ENCODE measurements at regions of chr6 and their contacts with region 1.

Region 1: DNA sequence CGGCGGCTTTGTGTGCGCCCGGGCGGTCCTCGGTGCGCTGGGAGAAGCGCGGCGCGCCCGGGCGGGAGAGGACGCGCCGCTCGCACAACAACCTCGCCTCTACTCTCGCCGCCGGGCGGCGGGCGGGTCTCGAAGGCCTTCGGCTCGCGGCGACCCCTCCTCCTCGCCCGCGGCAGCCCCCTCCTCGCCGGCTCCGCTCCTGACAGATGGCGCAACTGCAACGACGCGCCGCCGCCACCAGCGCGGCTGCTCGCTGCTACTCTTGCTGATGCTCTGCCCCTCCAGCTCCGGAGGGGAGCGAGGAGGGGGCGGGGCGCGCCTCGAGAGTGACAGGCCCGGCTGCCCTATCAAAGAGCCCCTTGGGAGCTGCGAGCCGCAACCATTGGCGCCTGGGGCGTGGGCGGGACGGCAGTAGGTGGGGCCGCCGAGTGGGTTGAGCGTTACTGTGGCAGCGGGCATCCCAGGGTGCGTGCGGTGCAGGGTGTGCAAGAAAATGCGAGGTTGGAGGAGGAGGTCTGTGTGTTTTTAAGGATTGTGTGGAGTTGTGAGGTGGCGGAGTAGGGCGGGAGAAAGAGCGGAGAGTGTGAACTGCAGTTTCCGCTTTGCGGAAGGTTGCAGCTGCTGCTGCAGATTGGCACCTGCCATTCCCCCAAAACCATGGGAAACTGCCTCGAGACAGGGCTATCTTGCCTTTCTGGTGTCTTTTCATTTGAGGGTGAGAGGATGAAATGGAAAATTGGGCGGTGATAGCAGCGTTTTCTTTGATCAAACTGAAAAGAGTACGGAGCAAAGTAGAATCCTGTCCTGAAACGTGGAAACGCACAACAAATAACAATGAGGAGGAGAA is at the start of gene FYN:
- DNase-seq: peak; percentile 99
- H3K4me3 ChIP-seq: peak within 1 kb of the TSS; percentile 78 to 93 (median 86)
- H3K27ac ChIP-seq: peak within 1 kb of the TSS; percentile 81 to 94 (median 89)
- H3K4me1 ChIP-seq: peaks cover 18 to 60% (median 45%) of the 10 kb centered on the region in 6 donors
- H3K27me3 ChIP-seq: peaks cover 0 to 8% (median 0%) of the 10 kb centered on the region in 7 donors
- CTCF ChIP-seq: peak; percentile 47 to 79 (median 63)
- POLR2A ChIP-seq: peak in 2 of 3 donors; percentile 73 to 87
- total RNA-seq, gene FYN: 193 to 409 (median 227) TPM

Region 2: GRCh38 chr6:110378552-110378951 is 1494.8 kb before region 1 on chr6:
- intact Hi-C with region 1: no loop called
- DNase-seq: no peak
- H3K4me3 ChIP-seq: no peak overlapping the region
- H3K27ac ChIP-seq: no peak overlapping the region
- H3K4me1 ChIP-seq: no peaks in the 10 kb centered on the region
- H3K27me3 ChIP-seq: no peaks in the 10 kb centered on the region
- CTCF ChIP-seq: no peak
- POLR2A ChIP-seq: no peak

Region 3: DNA sequence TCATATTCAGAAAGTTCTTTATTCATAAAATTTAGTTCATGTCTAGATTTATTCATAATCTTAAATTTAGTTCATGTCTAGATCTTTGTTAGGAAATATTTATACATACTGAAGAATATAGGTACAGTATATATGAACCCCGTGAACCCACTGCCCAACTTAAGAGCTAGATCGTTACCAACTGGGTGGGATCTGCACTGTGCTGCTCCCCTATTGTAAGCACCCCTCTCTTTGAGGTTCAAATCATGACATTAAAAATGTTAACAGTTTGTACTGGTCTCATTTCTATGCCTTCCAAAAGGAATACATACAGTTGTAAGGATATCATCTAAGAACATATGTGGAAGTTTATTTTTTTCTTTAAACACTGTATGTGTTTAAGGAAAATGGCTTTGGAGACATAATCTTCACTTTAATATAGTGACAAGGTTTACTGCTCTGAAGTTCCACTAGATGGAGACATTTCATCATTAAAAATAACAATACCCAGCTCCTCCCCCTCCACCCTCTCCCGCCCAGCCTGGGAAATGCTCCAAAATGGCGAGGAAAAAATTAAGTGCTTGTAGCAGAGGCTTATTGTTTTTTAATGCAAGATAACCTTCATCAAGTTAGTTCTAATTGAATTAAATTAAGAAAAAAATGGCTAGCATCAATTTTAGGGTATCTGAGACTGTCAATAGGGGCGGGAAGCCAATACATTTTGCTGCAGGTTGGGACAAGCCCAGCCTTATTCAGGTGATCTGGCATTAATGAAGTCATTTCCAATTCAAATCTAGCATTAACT is 163.6 kb before region 1 on chr6:
- intact Hi-C with region 1: no loop called
- DNase-seq: no peak
- H3K4me3 ChIP-seq: peak overlapping the region in 1 of 8 donors; percentile 26
- H3K27ac ChIP-seq: peak overlapping the region in 6 of 8 donors; percentile 22 to 71 (median 57)
- H3K4me1 ChIP-seq: peaks cover 9 to 57% (median 24%) of the 10 kb centered on the region in 6 donors
- H3K27me3 ChIP-seq: no peaks in the 10 kb centered on the region
- CTCF ChIP-seq: peak; percentile 59 to 92 (median 77)
- POLR2A ChIP-seq: no peak

Region 4: DNA sequence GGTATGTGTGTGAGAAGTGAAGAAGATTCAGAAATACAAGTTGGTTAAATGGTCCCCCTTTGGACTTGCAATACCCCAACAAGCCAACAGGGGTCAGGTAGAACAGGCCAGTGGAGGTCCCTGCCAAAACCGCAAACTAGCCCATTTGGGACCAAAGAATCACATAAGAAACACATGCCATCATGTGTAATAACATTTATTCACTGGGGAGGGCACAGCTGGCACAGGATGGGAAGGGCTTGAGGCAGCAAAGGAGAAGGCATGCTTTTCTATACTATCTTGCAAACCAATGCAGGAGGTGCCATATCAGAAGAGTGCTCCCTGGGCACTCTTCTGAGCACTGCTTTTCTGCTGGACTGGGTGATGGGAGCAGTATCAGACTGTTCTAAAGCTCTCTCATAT is 151.6 kb before region 1 on chr6:
- intact Hi-C with region 1: loop called (anchors 10 kb)
- DNase-seq: no peak
- H3K4me3 ChIP-seq: no peak overlapping the region
- H3K27ac ChIP-seq: peak overlapping the region in 5 of 8 donors; percentile 9 to 59 (median 51)
- H3K4me1 ChIP-seq: peaks cover 26 to 83% (median 57%) of the 10 kb centered on the region in 6 donors
- H3K27me3 ChIP-seq: no peaks in the 10 kb centered on the region
- CTCF ChIP-seq: peak in 10 of 11 experiments; percentile 14 to 69 (median 58)
- POLR2A ChIP-seq: no peak

Measured in spleen (tissue), 13 donors.